A549 (cell line): ENCODE measurements at regions of chr5 and their contacts with region 1.

Region 1: GRCh38 chr5:151051066-151051930 is 29.5 kb downstream of the TNIP1 start:
- DNase-seq: peak; percentile 83 to 85
- ATAC-seq: peak; percentile 79 to 92
- H3K4me3 ChIP-seq: no peak overlapping the region
- H3K27ac ChIP-seq: peak overlapping the region; percentile 29 to 33; a peak in 3 of 6 replicates
- H3K4me1 ChIP-seq: peaks cover 12% of the 10 kb centered on the region
- CTCF ChIP-seq: peak; percentile 92
- EP300 ChIP-seq: no peak
- POLR2A ChIP-seq: no peak
- RAD21 ChIP-seq: peak; percentile 93 to 97

Region 2: GRCh38 chr5:151002250-151002649 is 49.0 kb before region 1 on chr5:
- CTCF ChIA-PET with region 1: interaction called, 12 read pairs
- POLR2A ChIA-PET with region 1: no interaction called
- DNase-seq: peak; percentile 24 to 33
- ATAC-seq: peak; percentile 46 to 71; a peak in 3 of 6 replicates
- H3K4me3 ChIP-seq: no peak overlapping the region
- H3K27ac ChIP-seq: no peak overlapping the region
- H3K4me1 ChIP-seq: no peaks in the 10 kb centered on the region
- CTCF ChIP-seq: peak; percentile 56
- EP300 ChIP-seq: no peak
- POLR2A ChIP-seq: no peak
- RAD21 ChIP-seq: peak; percentile 71 to 85

Region 3: DNA sequence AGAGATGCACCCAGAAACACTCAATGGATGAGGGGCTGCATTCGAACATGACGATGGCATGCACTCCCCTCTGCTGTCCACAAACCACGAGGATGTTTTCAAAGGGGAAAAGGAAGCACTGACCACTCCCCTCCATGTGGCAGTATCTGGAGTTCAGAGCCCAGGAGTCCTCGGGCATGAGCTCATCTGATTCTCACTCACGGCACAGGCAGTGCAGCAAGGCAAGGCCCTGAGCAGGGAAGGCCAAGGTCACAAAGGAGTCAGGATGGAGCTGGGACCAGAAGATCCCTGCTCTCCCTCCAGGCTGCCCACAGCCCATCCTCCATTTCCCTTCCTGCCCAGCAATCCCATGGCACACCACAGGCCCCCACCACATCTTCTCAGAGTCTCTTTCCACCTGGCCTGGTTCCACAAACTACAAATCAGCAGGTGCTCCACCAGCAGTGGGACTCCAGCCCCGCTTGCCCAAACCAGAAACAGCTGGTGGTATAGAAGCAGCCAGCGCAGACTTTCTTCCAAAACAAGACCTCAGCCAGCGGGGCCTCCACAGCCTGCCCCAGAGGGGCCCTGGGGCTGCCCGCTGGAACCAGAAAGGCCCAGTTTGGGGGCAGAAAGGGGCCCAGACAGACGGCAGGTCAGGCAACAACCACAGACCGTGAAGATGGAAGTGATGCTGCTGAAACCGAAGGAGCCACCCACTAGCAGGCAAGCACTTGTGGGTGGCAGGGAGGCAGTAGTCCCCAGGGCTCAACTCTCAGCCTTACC is 17.3 kb after region 1 on chr5:
- CTCF ChIA-PET with region 1: interaction called, 153 read pairs
- POLR2A ChIA-PET with region 1: no interaction called
- DNase-seq: no peak
- ATAC-seq: no peak
- H3K4me3 ChIP-seq: no peak overlapping the region
- H3K27ac ChIP-seq: peak overlapping the region; percentile 19 to 45; a peak in 3 of 6 replicates
- H3K4me1 ChIP-seq: peaks cover 60% of the 10 kb centered on the region
- CTCF ChIP-seq: no peak
- EP300 ChIP-seq: no peak
- POLR2A ChIP-seq: no peak
- RAD21 ChIP-seq: no peak

Region 4: GRCh38 chr5:151080623-151081430 is 29.5 kb after region 1 on chr5 and contains the start of gene TNIP1:
- CTCF ChIA-PET with region 1: interaction called, 113 read pairs
- POLR2A ChIA-PET with region 1: interaction called, 6 read pairs
- DNase-seq: peak; percentile 88 to 93
- ATAC-seq: peak; percentile 79 to 90
- H3K4me3 ChIP-seq: peak within 1 kb of the TSS; percentile 67
- H3K27ac ChIP-seq: peak within 1 kb of the TSS; percentile 91 to 98
- H3K4me1 ChIP-seq: peaks cover 72% of the 10 kb centered on the region
- CTCF ChIP-seq: no peak
- EP300 ChIP-seq: no peak
- POLR2A ChIP-seq: peak; percentile 46; the same call in 1 of the 2 replicates
- RAD21 ChIP-seq: no peak
- polyA plus RNA-seq, gene TNIP1: 43.4 and 48.4 TPM in 2 replicates

Region 5: GRCh38 chr5:151104795-151105194 is 53.5 kb after region 1 on chr5:
- CTCF ChIA-PET with region 1: interaction called, 704 read pairs
- POLR2A ChIA-PET with region 1: no interaction called
- DNase-seq: no peak
- ATAC-seq: no peak
- H3K4me3 ChIP-seq: no peak overlapping the region
- H3K27ac ChIP-seq: no peak overlapping the region
- H3K4me1 ChIP-seq: peaks cover 7% of the 10 kb centered on the region; the same call in 2 of the 3 replicates
- CTCF ChIP-seq: no peak
- EP300 ChIP-seq: no peak
- POLR2A ChIP-seq: no peak
- RAD21 ChIP-seq: no peak